CD4-positive, alpha-beta T cell (primary cell): ENCODE measurements at regions of chr14 and their contacts with region 1.

Region 1: GRCh38 chr14:74712499-74713394 is at the starts of genes AREL1 and FCF1:
- DNase-seq: peak; percentile 62 to 93 (median 70)
- ATAC-seq: peak; percentile 92
- H3K4me3 ChIP-seq: peak within 1 kb of the TSS; percentile 76
- H3K4me3 Mint-ChIP-seq: peak within 1 kb of the TSS; percentile 90
- H3K27ac ChIP-seq: peak within 1 kb of the TSS; percentile 76 to 81
- H3K27ac Mint-ChIP-seq: peak within 1 kb of the TSS; percentile 92
- H3K4me1 ChIP-seq: peaks cover 12% of the 10 kb centered on the region
- H3K4me1 Mint-ChIP-seq: peaks cover 65% of the 10 kb centered on the region
- H3K27me3 ChIP-seq: no peaks in the 10 kb centered on the region
- H3K27me3 Mint-ChIP-seq: no peaks in the 10 kb centered on the region
- CTCF ChIP-seq: no peak
- total RNA-seq, gene AREL1: 30.6 to 35.9 TPM
- total RNA-seq, gene FCF1: 31.9 to 32.9 TPM

Region 2: GRCh38 chr14:74302634-74303577 is 409.8 kb before region 1 on chr14 and contains the start of gene ABCD4:
- CTCF ChIA-PET with region 1: no interaction called
- POLR2A ChIA-PET with region 1: no interaction called
- intact Hi-C with region 1: loop called in 1 of 2 experiments (anchors 2 kb)
- DNase-seq: peak; percentile 68 to 91 (median 81)
- ATAC-seq: peak; percentile 70
- H3K4me3 ChIP-seq: peak within 1 kb of the TSS; percentile 96
- H3K4me3 Mint-ChIP-seq: peak within 1 kb of the TSS; percentile 97
- H3K27ac ChIP-seq: peak within 1 kb of the TSS; percentile 75 to 86
- H3K27ac Mint-ChIP-seq: peak within 1 kb of the TSS; percentile 87
- H3K4me1 ChIP-seq: peaks cover 33% of the 10 kb centered on the region
- H3K4me1 Mint-ChIP-seq: peaks cover 27% of the 10 kb centered on the region
- H3K27me3 ChIP-seq: no peaks in the 10 kb centered on the region
- H3K27me3 Mint-ChIP-seq: no peaks in the 10 kb centered on the region
- CTCF ChIP-seq: peak; percentile 53
- total RNA-seq, gene ABCD4: 59.6 to 63.0 TPM

Region 3: DNA sequence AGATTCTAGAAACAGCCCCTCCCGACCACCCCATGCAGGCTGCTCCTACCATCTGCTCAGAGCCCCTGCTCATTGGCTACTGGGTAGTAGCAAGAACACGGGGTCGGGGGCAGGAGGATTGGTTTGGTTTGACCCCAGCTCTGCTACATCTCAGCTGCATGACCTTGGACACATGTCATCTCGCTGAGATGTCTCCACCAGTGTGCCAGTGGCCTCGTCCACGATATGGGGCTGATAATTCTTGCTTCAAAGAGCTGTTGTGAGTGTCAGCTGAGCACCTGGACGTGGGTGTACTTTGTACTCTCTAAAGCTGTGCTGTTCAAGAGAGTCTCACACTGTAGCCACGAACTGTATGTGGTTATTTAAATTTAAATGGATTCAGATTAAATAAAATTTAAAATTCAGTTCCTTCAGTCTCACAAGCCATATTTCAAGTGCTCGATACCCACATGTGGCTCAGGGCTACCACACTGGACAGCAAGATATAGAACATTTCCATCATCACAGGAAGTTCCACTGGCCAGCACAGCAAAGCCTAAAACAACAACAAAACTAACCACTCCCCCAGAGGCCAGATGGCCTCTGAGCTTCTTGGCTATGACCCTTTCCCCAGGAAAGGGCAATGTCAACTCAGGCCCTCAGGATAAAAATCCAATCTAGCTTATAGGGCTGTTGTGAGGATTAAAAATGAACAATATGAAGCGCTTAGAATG is 119.3 kb before region 1 on chr14:
- CTCF ChIA-PET with region 1: no interaction called
- POLR2A ChIA-PET with region 1: no interaction called
- intact Hi-C with region 1: no loop called
- DNase-seq: no peak
- ATAC-seq: no peak
- H3K4me3 ChIP-seq: no peak overlapping the region
- H3K4me3 Mint-ChIP-seq: no peak overlapping the region
- H3K27ac ChIP-seq: no peak overlapping the region
- H3K27ac Mint-ChIP-seq: no peak overlapping the region
- H3K4me1 ChIP-seq: no peaks in the 10 kb centered on the region
- H3K4me1 Mint-ChIP-seq: no peaks in the 10 kb centered on the region
- H3K27me3 ChIP-seq: no peaks in the 10 kb centered on the region
- H3K27me3 Mint-ChIP-seq: no peaks in the 10 kb centered on the region
- CTCF ChIP-seq: no peak

Region 4: DNA sequence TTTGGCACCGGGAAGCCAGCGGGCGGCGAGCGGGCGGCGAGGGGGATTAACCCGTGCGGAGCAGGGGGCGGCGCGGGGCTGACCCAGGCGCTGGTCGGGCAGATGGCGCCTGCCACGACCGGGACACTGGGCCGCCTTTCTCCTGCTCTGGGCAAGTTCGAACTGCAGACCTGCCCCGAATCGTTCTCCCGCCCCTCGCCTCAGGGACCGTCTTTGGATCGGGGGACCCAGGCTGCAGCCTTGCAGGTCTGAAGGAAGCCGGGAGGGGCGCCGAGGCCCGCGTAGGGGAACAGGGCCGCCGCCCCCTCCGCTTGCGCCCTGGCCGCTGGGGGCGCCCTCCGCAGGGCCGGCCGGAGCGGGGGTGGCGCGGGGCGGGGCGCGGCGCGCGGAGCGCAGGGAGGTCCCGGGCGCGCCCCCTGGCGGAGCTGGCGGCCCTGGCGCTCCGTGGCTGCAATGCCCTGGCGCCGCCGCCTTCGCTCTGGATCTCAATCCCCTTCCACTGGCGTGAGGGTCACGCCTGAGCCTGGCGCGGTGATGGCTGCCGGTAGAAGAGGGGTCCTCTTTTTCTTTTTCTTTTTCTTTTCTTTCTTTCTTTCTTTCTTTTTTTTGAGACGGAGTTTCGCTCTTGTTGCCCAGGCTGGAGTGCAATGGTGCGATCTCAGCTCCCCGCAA is 100.3 kb before region 1 on chr14:
- CTCF ChIA-PET with region 1: interaction called, 3 read pairs
- POLR2A ChIA-PET with region 1: no interaction called
- intact Hi-C with region 1: loop called (anchors 1 to 2 kb)
- DNase-seq: peak; percentile 65 to 95 (median 81)
- ATAC-seq: peak; percentile 79
- H3K4me3 ChIP-seq: peak overlapping the region; percentile 65
- H3K4me3 Mint-ChIP-seq: peak overlapping the region; percentile 79
- H3K27ac ChIP-seq: no peak overlapping the region
- H3K27ac Mint-ChIP-seq: no peak overlapping the region
- H3K4me1 ChIP-seq: peaks cover 54% of the 10 kb centered on the region
- H3K4me1 Mint-ChIP-seq: peaks cover 29% of the 10 kb centered on the region
- H3K27me3 ChIP-seq: no peaks in the 10 kb centered on the region
- H3K27me3 Mint-ChIP-seq: peaks cover 9% of the 10 kb centered on the region
- CTCF ChIP-seq: peak; percentile 52